Activated CD8-positive, alpha-beta memory T cell treated with anti-CD3 and anti-CD28 coated beads, Interleukin-2, amount 10 ng/mL, durations not matched to agents 7 days and 5 days (primary cell): ENCODE measurements at regions of chr11 and their contacts with region 1.

Region 1: DNA sequence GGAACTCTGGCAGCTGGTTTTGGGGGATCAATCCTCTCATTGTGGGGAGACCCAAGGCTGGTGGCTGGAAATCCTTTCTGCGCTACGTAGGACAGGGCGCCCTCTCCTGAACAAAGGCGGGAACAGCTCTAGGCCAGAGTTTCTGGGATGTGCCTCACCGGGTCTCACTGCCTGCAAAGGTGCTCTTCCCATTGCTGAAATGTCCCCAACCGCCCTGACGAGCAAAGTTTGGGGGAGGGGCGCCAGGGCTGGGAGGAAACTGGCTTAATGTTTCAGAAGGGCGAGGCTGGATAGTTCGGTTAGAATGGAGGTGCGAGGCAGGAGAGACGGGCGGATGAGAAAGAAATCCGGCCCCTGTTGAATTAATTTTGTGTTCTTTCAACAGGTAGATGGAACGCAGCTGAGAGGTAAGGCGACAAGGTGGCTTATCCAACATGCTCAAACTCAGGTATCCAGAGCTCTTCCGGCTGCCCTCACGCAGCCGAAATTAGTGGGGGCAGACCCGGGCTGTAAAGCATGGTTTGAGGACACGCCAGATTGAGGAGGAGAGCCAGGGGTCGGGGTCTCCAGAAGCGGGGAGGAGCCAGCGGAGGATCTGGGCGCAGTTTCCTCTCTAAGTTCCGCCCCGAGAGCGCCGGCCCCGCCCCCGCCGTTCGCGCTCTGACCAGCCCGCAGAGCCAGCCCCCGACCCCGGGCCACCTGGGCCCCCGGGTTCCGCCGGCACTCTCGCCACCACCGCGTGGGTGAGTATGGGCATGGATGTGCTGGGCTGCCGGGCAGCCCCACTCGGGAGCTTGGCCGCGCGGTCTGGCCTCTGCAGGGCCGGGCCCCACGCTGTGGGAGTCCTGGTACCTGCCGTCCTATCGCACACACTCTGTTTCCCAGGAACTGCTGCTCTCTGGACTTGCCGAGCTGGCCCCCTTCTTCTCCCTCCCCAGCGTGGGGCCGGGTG is at the start of gene PGAP2:
- DNase-seq: peak; percentile 69
- ATAC-seq: peak; percentile 87
- H3K4me3 Mint-ChIP-seq: peak within 1 kb of the TSS; percentile 84
- H3K27ac Mint-ChIP-seq: peak within 1 kb of the TSS; percentile 84
- H3K4me1 Mint-ChIP-seq: peaks cover 15% of the 10 kb centered on the region
- H3K27me3 Mint-ChIP-seq: no peaks in the 10 kb centered on the region
- total RNA-seq, gene PGAP2: 22.7 to 23.5 TPM

Region 2: DNA sequence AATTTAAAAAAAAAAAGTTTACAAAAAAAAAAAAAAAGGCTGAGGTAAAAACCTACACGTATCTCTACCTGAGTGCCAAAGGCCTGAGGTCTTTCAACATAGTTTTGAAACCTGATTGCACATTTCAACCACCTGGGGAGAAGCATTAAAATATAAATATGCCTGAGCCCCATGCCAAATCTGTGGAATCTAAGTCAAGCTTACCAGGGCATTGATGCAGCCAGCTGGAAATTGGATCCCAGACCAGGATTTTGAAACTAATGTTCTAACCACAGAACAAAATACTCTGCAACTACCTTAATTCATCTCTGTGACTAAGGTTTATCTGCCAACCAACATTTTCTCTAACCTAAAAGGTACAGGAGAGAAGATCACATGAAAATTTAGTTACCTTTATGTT is 98.2 kb before region 1 on chr11:
- CTCF ChIA-PET with region 1: interaction called, 14 read pairs
- DNase-seq: no peak
- ATAC-seq: no peak
- H3K4me3 Mint-ChIP-seq: no peak overlapping the region
- H3K27ac Mint-ChIP-seq: no peak overlapping the region
- H3K4me1 Mint-ChIP-seq: peaks cover 4% of the 10 kb centered on the region
- H3K27me3 Mint-ChIP-seq: no peaks in the 10 kb centered on the region

Region 3: GRCh38 chr11:3781423-3781822 is 26.8 kb before region 1 on chr11:
- CTCF ChIA-PET with region 1: interaction called, 66 read pairs
- DNase-seq: no peak
- ATAC-seq: no peak
- H3K4me3 Mint-ChIP-seq: no peak overlapping the region
- H3K27ac Mint-ChIP-seq: peak overlapping the region; percentile 57
- H3K4me1 Mint-ChIP-seq: peaks cover 47% of the 10 kb centered on the region
- H3K27me3 Mint-ChIP-seq: no peaks in the 10 kb centered on the region

Region 4: GRCh38 chr11:3824714-3825472 is 16.7 kb after region 1 on chr11:
- CTCF ChIA-PET with region 1: interaction called, 28 read pairs
- DNase-seq: peak; percentile 90
- ATAC-seq: peak; percentile 94
- H3K4me3 Mint-ChIP-seq: no peak overlapping the region
- H3K27ac Mint-ChIP-seq: peak overlapping the region; percentile 3
- H3K4me1 Mint-ChIP-seq: peaks cover 20% of the 10 kb centered on the region
- H3K27me3 Mint-ChIP-seq: no peaks in the 10 kb centered on the region

Region 5: GRCh38 chr11:3841426-3842350 is 33.5 kb after region 1 on chr11:
- CTCF ChIA-PET with region 1: interaction called, 26 read pairs
- DNase-seq: peak; percentile 95
- ATAC-seq: peak; percentile 76
- H3K4me3 Mint-ChIP-seq: peak overlapping the region; percentile 92
- H3K27ac Mint-ChIP-seq: peak overlapping the region; percentile 96
- H3K4me1 Mint-ChIP-seq: peaks cover 42% of the 10 kb centered on the region
- H3K27me3 Mint-ChIP-seq: no peaks in the 10 kb centered on the region

Region 6: GRCh38 chr11:3880724-3881123 is 72.5 kb after region 1 on chr11:
- CTCF ChIA-PET with region 1: no interaction called
- DNase-seq: no peak
- ATAC-seq: no peak
- H3K4me3 Mint-ChIP-seq: no peak overlapping the region
- H3K27ac Mint-ChIP-seq: peak overlapping the region; percentile 26
- H3K4me1 Mint-ChIP-seq: peaks cover 50% of the 10 kb centered on the region
- H3K27me3 Mint-ChIP-seq: no peaks in the 10 kb centered on the region

Region 7: GRCh38 chr11:3947061-3947460 is 138.9 kb after region 1 on chr11:
- CTCF ChIA-PET with region 1: no interaction called
- DNase-seq: peak; percentile 88
- ATAC-seq: peak; percentile 80
- H3K4me3 Mint-ChIP-seq: peak overlapping the region; percentile 70
- H3K27ac Mint-ChIP-seq: peak overlapping the region; percentile 98
- H3K4me1 Mint-ChIP-seq: peaks cover 94% of the 10 kb centered on the region
- H3K27me3 Mint-ChIP-seq: no peaks in the 10 kb centered on the region